Activated CD4-positive, alpha-beta T cell treated with anti-CD3 and anti-CD28 coated beads, Interleukin-2, amount 10 ng/mL, durations not matched to agents 7 days and 5 days (primary cell): ENCODE measurements at regions of chr6 and their contacts with region 1.

Region 1: DNA sequence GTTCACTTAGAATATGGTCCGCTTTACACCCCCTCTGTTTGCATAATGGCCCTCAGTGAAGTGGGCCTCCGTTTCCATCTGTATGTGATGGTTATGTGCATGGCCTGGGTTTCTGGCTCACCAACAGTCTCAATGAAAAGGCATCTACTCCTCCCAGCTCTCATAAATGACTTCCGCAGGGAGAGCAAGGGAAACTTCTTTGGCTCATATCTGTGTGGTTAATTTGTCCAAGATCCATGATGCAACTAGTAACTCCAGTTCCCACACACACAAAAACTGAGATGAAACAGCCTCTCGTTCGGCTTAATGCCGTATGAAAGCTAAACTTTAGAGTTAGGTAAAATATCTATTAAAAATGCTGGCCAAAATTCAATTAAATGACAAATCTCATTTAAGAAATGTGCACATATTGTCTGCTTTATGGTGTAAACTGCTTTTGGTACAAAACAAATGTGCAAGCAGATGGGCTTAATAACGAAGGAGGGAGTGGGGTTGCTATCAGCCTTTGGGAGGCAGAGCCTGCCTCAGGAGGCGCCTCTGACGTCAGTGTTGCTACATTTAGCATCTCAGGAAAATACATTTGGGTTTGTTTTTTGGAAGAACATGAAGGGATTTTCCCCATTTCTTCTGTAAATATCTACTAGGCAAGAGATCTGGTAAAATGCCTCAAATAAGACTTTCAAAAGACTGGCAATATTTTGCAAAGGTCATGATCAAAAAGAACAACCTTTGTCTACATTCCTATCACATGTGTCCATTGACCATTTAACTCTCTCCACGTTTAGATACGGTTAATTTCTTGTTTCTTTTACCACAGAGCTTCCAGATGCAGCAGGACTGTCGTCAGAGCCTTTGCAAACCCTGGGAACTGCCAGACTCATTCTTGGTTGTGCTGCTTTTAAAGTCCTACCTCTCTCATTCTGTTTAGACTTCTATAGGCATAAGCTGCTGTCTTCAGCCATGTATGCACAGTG is 96.8 kb downstream of the ARMC2 start:
- DNase-seq: no peak
- H3K4me3 Mint-ChIP-seq: no peak overlapping the region
- H3K27ac Mint-ChIP-seq: peak overlapping the region; percentile 61
- H3K4me1 Mint-ChIP-seq: peaks cover 53% of the 10 kb centered on the region
- H3K27me3 Mint-ChIP-seq: no peaks in the 10 kb centered on the region

Region 2: DNA sequence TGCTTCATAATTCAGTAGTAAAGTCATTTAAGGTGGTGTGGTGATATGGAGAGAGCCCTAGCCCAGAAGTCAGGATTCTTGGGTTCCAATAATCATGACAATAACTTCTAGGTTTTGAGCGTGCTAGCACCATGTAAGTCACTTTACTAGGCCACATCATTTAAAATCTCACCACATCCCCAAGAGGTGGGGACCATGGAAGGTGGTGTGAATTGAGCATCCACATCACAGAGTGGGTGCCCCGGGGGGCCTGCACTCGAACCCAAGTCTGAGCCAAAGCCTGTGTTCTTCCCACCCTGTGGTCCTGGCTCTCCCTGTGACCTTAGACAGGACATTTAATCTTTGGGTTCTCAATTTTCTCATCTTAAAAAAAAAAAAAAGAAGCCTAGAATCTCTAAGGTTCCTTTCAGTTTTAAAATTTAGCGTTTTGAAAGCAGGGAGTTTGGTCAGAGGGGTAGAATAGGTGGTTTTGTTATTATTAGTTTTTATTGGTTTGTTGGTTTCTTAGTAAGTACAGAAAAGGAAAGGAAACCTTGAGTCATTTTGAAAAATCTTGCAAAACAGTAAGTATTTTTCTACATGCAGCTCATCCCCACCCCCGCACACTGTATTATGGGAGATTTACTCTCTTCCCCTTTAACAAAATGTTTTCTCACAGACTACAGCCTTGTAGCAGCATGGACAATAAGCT is 70.4 kb before region 1 on chr6:
- CTCF ChIA-PET with region 1: no interaction called
- POLR2A ChIA-PET with region 1: no interaction called
- DNase-seq: peak; percentile 60
- H3K4me3 Mint-ChIP-seq: peak overlapping the region; percentile 57
- H3K27ac Mint-ChIP-seq: peak overlapping the region; percentile 94
- H3K4me1 Mint-ChIP-seq: peaks cover 69% of the 10 kb centered on the region
- H3K27me3 Mint-ChIP-seq: peaks cover 2% of the 10 kb centered on the region

Region 3: GRCh38 chr6:108927927-108928326 is 17.1 kb before region 1 on chr6:
- CTCF ChIA-PET with region 1: interaction called, 10 read pairs
- POLR2A ChIA-PET with region 1: no interaction called
- DNase-seq: no peak
- H3K4me3 Mint-ChIP-seq: no peak overlapping the region
- H3K27ac Mint-ChIP-seq: no peak overlapping the region
- H3K4me1 Mint-ChIP-seq: peaks cover 17% of the 10 kb centered on the region
- H3K27me3 Mint-ChIP-seq: peaks cover 32% of the 10 kb centered on the region

Region 4: GRCh38 chr6:109002051-109002697 is 57.2 kb after region 1 on chr6:
- CTCF ChIA-PET with region 1: no interaction called
- POLR2A ChIA-PET with region 1: no interaction called
- DNase-seq: no peak
- H3K4me3 Mint-ChIP-seq: no peak overlapping the region
- H3K27ac Mint-ChIP-seq: no peak overlapping the region
- H3K4me1 Mint-ChIP-seq: peaks cover 21% of the 10 kb centered on the region
- H3K27me3 Mint-ChIP-seq: no peaks in the 10 kb centered on the region